ENCODE measurements at regions of chr5 and their contacts with region 1.

Region 1: DNA sequence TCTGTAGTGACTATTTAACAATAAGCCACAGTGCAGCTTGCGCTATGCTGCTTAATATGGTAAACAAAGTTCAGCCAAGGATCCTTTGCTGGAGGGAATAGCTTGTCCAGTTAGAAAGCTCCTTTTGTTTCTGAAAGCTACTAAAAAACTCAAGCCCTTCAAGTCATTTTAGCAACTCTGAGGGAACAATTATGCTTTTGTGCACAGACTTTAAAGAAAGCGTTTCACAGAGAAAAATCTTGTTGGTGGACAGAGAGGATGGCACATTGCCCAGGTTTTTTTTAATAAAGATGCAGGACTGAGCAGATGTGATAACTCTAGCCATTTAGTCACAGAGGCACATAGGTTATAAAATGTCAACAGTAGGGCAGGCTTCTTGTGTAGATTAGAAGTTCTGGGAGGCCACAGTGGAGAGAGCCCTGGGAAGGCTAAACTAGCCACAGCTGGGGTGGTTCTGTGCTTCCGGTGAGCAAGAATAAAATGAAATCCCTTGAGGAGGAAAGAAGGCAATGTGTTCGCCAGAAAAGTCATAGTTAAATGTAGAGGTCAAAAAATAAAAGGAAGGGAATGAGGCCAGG is 63.4 kb downstream of the ALDH7A1 start:
- DNase-seq: no peak
- H3K4me3 ChIP-seq: no peak overlapping the region
- CTCF ChIP-seq: no peak

Region 2: DNA sequence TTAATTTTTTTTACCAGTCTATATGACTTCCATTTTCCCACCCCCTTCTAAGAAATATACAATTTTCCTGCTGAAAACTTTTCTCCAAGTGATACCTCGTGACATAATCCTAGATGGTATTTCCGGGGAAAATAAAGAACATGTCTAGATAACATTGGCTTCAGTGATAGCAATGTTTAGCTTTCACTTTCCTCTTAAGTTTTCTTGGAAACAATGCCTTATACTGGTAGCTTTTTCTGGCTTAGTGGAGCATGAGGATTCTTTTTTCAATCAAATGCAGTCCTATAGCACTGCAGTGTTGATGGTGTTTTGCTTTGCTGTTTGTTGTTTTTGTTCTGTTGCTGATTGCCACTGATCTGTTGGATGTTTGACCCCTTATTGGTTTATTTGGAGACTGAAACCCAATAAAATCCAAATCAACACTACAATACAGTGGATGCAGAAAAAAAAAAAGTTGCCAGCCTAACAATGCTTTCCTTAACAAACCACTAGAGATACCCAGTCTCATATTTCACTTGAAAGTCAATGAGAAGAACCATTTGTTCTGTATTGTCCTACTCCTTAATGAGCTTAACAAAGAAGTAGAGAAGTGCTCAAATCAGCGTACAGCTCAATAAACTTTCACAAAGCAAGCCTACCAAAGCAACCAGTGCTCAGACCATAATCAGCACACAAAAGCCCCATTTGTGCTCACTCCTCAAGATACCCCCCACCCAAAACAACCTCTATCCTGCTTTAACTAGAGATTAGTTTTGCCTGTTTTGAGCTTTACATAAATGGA is 182.6 kb before region 1 on chr5:
- in situ Hi-C with region 1: loop called (anchors 5 kb)
- DNase-seq: no peak
- H3K4me3 ChIP-seq: no peak overlapping the region
- CTCF ChIP-seq: no peak

Region 3: GRCh38 chr5:126446498-126447224 is 85.0 kb before region 1 on chr5:
- in situ Hi-C with region 1: no loop called
- DNase-seq: no peak
- H3K4me3 ChIP-seq: no peak overlapping the region
- CTCF ChIP-seq: no peak

Region 4: GRCh38 chr5:126477294-126478117 is 54.1 kb before region 1 on chr5:
- in situ Hi-C with region 1: loop called (anchors 5 kb)
- DNase-seq: peak; percentile 47
- H3K4me3 ChIP-seq: no peak overlapping the region
- CTCF ChIP-seq: no peak

Measured in astrocyte of the cerebellum (primary cell).